Panc1 (cell line): ENCODE measurements at regions of chr18 and their contacts with region 1.

Region 1: GRCh38 chr18:712401-713134 is at the start of gene ENOSF1:
- DNase-seq: peak; percentile 38
- ATAC-seq: peak; percentile 97
- H3K4me3 ChIP-seq: peak within 1 kb of the TSS; percentile 83 to 95
- H3K27ac ChIP-seq: peak within 1 kb of the TSS; percentile 96
- H3K4me1 ChIP-seq: peaks cover 7% of the 10 kb centered on the region; the same call in 1 of the 2 replicates
- H3K27me3 ChIP-seq: no peaks in the 10 kb centered on the region
- CTCF ChIP-seq: peak; percentile 95
- total RNA-seq, gene ENOSF1: 53.7 TPM

Region 2: DNA sequence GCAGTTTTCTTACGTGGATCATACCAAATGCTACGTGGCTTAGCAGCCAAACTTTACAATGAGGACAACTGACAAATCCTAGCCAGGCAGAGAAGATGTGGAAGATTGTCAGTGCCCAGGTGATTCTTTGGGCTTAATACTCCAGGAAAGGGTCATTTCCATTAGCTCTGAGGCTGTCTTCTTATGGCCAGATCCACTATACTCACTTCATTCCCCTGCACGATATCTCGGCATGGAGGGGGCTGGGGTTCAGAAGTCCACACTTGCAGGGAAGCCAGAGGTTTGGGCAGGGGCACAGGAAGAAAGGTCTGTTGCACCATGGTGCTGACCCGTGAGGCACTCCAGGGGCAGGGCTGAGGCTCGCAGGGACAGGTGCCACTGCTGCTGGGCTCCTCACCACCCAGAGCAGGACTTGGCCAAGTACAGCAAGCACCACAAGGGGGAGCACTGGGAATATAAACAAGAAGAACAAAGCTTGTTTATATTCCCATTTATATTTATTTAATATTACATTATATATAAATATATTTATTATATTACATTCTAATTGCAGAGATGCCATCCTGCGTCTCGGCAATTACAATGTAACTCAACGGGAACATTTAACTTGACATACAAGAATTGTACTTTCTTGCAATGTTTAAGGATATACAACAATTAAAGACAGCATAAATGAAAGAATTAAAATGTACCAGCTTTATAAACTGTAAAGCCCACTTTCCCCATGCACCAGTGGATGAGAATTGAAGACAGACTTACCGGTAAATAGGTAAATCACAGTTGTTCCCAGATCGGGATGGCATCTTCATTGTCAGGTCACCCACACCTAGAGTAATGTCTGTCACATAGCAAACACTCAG is 88.6 kb before region 1 on chr18:
- CTCF ChIA-PET with region 1: no interaction called
- POLR2A ChIA-PET with region 1: no interaction called
- in situ Hi-C with region 1: no loop called
- intact Hi-C with region 1: loop called (anchors 10 kb)
- DNase-seq: no peak
- ATAC-seq: peak; percentile 95
- H3K4me3 ChIP-seq: no peak overlapping the region
- H3K27ac ChIP-seq: no peak overlapping the region
- H3K4me1 ChIP-seq: no peaks in the 10 kb centered on the region
- H3K27me3 ChIP-seq: no peaks in the 10 kb centered on the region
- CTCF ChIP-seq: peak; percentile 78

Region 3: DNA sequence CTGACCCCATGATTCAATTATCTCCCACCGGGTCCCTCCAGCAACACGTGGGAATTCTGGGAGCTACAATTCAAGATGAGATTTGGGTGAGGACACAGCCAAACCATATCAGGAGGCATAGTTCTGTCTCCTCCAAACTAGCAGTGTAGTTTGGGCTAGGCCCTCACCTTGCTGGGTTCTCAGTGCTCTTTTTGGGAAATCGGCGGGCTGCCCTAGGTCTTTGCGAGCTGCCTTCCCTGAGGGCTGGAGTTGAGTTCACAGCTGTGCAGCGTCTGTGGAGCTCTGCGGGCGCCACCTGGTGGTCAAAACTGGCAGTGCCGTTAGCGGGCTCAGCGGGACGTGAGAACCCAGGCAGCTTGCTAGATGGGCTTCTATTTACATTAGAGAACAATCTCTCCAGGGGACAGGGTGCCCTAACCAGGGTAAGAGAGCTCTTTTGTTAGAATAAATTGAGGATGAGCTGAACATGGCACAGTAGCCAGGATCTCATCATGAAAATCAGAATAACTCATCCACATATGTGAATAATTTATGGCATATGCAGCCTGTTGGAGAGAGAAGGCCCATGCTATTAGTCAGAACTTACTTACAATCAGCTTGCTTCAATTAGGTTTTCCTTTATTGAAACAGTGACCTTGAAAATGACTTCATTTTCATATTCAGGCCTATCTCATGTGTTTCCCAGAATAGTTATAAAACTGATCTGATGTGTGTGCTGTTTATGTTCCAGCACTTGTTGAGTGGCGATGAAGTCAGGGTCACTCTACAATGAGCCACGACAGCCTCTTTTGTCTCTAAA is 126.9 kb after region 1 on chr18:
- CTCF ChIA-PET with region 1: interaction called, 7 read pairs
- POLR2A ChIA-PET with region 1: interaction called, 3 read pairs
- in situ Hi-C with region 1: no loop called
- intact Hi-C with region 1: loop called (anchors 10 kb)
- DNase-seq: no peak
- ATAC-seq: peak; percentile 95
- H3K4me3 ChIP-seq: peak overlapping the region in 1 of 2 experiments; percentile 17; a peak in 1 of 4 replicates
- H3K27ac ChIP-seq: no peak overlapping the region
- H3K4me1 ChIP-seq: peaks cover 7% of the 10 kb centered on the region; the same call in 1 of the 2 replicates
- H3K27me3 ChIP-seq: no peaks in the 10 kb centered on the region
- CTCF ChIP-seq: peak; percentile 97